CD8-positive, alpha-beta T cell (primary cell): ENCODE measurements at regions of chr18 and their contacts with region 1.

Region 1: GRCh38 chr18:50928551-50928950 is 39.3 kb upstream of the ELAC1 start:
- DNase-seq: no peak
- ATAC-seq: no peak
- H3K4me3 ChIP-seq: no peak overlapping the region
- H3K4me3 Mint-ChIP-seq: no peak overlapping the region
- H3K27ac ChIP-seq: no peak overlapping the region
- H3K27ac Mint-ChIP-seq: no peak overlapping the region
- H3K4me1 ChIP-seq: no peaks in the 10 kb centered on the region
- H3K4me1 Mint-ChIP-seq: no peaks in the 10 kb centered on the region
- H3K27me3 ChIP-seq: no peaks in the 10 kb centered on the region
- H3K27me3 Mint-ChIP-seq: no peaks in the 10 kb centered on the region
- CTCF ChIP-seq: no peak

Region 2: DNA sequence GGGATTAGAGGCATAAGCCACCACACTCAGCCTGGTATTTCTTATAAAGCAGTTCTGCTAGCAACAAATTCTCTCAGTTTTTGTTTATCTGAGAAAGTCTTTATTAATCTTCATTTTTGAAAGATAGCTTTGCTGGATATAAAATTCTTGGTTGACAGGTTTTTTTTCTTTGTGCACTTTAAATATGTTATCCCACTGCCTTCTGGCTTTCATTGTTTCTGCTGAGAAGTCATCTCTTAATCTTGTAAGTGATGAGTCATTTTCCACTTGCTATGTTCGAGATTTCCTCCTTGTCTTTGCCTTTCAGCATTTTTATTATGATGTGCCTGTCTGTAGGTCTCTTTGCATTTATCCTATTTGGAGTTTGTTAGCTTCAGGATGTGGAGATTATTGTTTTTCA is 33.4 kb after region 1 on chr18:
- CTCF ChIA-PET with region 1: no interaction called
- POLR2A ChIA-PET with region 1: no interaction called
- intact Hi-C with region 1: no loop called
- DNase-seq: no peak
- ATAC-seq: no peak
- H3K4me3 ChIP-seq: no peak overlapping the region
- H3K4me3 Mint-ChIP-seq: no peak overlapping the region
- H3K27ac ChIP-seq: no peak overlapping the region
- H3K27ac Mint-ChIP-seq: no peak overlapping the region
- H3K4me1 ChIP-seq: no peaks in the 10 kb centered on the region
- H3K4me1 Mint-ChIP-seq: no peaks in the 10 kb centered on the region
- H3K27me3 ChIP-seq: peaks cover 0 to 4% of the 10 kb centered on the region in 2 experiments
- H3K27me3 Mint-ChIP-seq: no peaks in the 10 kb centered on the region
- CTCF ChIP-seq: no peak

Region 3: DNA sequence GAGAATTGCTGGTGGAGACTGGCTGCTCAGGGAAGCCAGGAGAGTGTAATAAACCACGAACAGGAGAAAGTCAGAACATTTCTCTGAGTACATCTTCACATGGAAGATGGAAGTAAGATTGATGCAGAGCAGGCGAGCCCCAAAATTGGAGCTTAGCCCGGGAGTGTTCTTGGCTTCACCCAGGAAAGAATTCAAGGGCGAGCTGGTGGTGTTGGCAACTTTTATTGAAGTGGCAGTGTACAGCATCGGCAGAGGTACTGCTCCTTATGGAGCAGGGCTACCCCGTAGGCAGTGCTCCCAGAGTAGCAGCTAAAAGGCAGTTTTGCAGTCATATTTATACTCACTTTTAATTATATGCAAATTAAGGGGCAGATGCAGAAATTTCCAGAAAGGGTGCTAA is 550.4 kb after region 1 on chr18:
- CTCF ChIA-PET with region 1: no interaction called
- POLR2A ChIA-PET with region 1: no interaction called
- intact Hi-C with region 1: loop called in 1 of 2 experiments (anchors 5 kb)
- DNase-seq: no peak
- ATAC-seq: no peak
- H3K4me3 ChIP-seq: no peak overlapping the region
- H3K4me3 Mint-ChIP-seq: no peak overlapping the region
- H3K27ac ChIP-seq: no peak overlapping the region
- H3K27ac Mint-ChIP-seq: no peak overlapping the region
- H3K4me1 ChIP-seq: no peaks in the 10 kb centered on the region
- H3K4me1 Mint-ChIP-seq: no peaks in the 10 kb centered on the region
- H3K27me3 ChIP-seq: no peaks in the 10 kb centered on the region
- H3K27me3 Mint-ChIP-seq: no peaks in the 10 kb centered on the region
- CTCF ChIP-seq: no peak